ENCODE measurements at regions of chr14 and their contacts with region 1.

Region 1: DNA sequence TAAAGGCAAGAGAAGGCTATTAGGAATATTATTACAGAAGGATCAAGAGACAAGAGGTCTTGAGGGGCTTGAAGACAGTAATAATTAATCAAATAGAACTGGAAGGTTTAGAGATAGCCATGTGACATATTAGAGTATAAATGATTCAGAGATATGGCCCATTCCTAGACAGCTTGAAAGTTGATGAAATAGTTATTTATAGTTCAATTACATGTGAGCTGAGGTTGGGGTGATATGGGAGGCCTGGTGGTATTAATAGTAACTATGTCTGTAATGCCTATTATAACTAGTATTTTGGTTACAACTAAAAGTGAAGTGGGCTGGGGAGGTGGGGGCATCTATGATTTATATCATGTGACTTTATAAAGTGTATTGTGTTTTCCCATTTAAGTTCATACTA is 14.1 kb upstream of the MIS18BP1 start:
- DNase-seq: no peak
- ATAC-seq: no peak
- H3K4me3 ChIP-seq: no peak overlapping the region
- H3K27ac ChIP-seq: no peak overlapping the region
- H3K4me1 ChIP-seq: no peaks in the 10 kb centered on the region
- H3K27me3 ChIP-seq: no peaks in the 10 kb centered on the region
- CTCF ChIP-seq: no peak
- POLR2A ChIP-seq: no peak

Region 2: DNA sequence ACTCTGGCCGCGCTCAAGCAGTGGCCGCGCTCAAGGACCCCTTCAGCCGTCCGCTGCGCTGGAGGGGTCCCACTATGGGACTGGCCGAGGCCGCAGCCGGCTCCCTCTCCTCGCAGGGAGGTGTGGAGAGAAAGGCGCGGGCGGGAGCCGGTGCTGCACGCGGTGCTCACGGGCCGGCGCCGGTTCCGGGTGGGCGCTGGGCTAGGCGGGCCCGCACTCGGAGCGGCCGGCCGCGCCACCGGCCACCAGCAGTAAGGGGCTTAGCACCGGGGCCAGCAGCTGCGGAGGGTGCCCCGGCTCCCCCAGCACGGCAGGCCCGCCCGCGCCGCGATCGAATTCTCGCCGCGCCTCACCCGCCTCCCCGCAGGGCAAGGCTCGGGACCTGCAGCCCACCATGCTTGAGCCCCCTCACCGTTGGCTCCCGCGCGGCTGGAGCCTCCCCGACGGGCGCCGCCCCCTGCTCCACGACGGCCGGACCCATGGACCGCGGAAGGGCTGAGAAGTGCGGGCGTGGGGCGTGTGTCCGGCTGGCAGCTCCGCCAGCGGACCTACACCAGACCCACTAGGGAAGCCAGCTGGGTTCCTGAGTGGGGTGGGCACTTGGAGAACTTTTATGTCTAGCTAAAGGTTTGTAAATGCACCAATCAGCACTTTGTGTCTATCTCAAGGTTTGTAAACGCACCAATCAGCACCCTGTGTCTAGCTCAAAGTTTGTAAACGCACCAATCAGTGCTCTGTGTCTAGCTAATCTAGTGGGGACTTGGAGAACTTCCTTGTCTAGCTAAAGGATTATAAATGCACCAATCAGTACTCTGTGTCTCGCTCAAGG is 354.8 kb before region 1 on chr14:
- intact Hi-C with region 1: loop called (anchors 5 kb)
- DNase-seq: peak in 2 of 4 donors; percentile 14 to 16
- ATAC-seq: peak; percentile 51
- H3K4me3 ChIP-seq: peak overlapping the region in 1 of 2 donors; percentile 25
- H3K27ac ChIP-seq: no peak overlapping the region
- H3K4me1 ChIP-seq: peaks cover 9% of the 10 kb centered on the region
- H3K27me3 ChIP-seq: peaks cover 0 to 8% of the 10 kb centered on the region in 2 donors
- CTCF ChIP-seq: no peak
- POLR2A ChIP-seq: no peak

Region 3: DNA sequence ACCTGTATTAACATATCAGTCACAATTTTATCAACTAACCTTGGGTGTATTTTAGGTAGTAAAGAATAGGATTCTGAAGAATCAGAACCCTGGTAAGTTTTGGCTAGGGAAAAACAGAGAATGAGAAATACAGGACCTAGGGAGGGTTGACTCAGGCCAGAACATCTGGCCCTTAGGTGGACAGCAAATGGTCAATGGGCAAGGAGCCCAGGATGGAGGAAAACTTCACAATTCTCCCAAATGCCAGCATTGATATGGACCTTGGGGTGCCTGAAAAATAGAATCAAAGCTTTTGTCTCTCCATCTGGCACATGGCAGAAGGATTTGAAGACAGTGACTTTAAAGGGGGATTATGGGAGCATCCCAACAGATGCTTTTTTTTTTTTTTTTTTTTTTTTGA is 215.9 kb before region 1 on chr14:
- intact Hi-C with region 1: no loop called
- DNase-seq: no peak
- ATAC-seq: no peak
- H3K4me3 ChIP-seq: no peak overlapping the region
- H3K27ac ChIP-seq: no peak overlapping the region
- H3K4me1 ChIP-seq: no peaks in the 10 kb centered on the region
- H3K27me3 ChIP-seq: no peaks in the 10 kb centered on the region
- CTCF ChIP-seq: no peak
- POLR2A ChIP-seq: no peak